ENCODE measurements at regions of chr9 and their contacts with region 1.

Region 1: GRCh38 chr9:98315551-98316060 is 60.2 kb upstream of the TBC1D2 start:
- DNase-seq: peak; percentile 26
- ATAC-seq: peak; percentile 95
- H3K4me3 ChIP-seq: no peak overlapping the region
- H3K27ac ChIP-seq: no peak overlapping the region
- H3K4me1 ChIP-seq: no peaks in the 10 kb centered on the region
- H3K27me3 ChIP-seq: no peaks in the 10 kb centered on the region
- CTCF ChIP-seq: peak; percentile 91 to 94 (median 94)
- EP300 ChIP-seq: no peak
- POLR2A ChIP-seq: no peak
- RAD21 ChIP-seq: peak; percentile 94

Region 2: GRCh38 chr9:98182069-98182820 is 133.4 kb before region 1 on chr9:
- CTCF ChIA-PET with region 1: no interaction called
- POLR2A ChIA-PET with region 1: no interaction called
- RAD21 ChIA-PET with region 1: no interaction called
- SMC1A ChIA-PET with region 1: no interaction called
- in situ Hi-C with region 1: no loop called
- intact Hi-C with region 1: no loop called
- DNase-seq: no peak
- ATAC-seq: no peak
- H3K4me3 ChIP-seq: no peak overlapping the region
- H3K27ac ChIP-seq: no peak overlapping the region
- H3K4me1 ChIP-seq: no peaks in the 10 kb centered on the region
- H3K27me3 ChIP-seq: no peaks in the 10 kb centered on the region
- CTCF ChIP-seq: no peak
- EP300 ChIP-seq: no peak
- POLR2A ChIP-seq: no peak
- RAD21 ChIP-seq: no peak

Region 3: GRCh38 chr9:98791147-98792095 is 475.8 kb after region 1 on chr9:
- CTCF ChIA-PET with region 1: interaction called, 5 read pairs
- POLR2A ChIA-PET with region 1: no interaction called
- RAD21 ChIA-PET with region 1: no interaction called
- SMC1A ChIA-PET with region 1: no interaction called
- in situ Hi-C with region 1: no loop called
- intact Hi-C with region 1: loop called (anchors 1 kb)
- DNase-seq: no peak
- ATAC-seq: peak; percentile 95
- H3K4me3 ChIP-seq: no peak overlapping the region
- H3K27ac ChIP-seq: no peak overlapping the region
- H3K4me1 ChIP-seq: peaks cover 3% of the 10 kb centered on the region; the same call in 1 of the 2 replicates
- H3K27me3 ChIP-seq: peaks cover 0 to 2% of the 10 kb centered on the region in 2 experiments; a peak in 1 of 4 replicates
- CTCF ChIP-seq: peak; percentile 90 to 97 (median 96)
- EP300 ChIP-seq: no peak
- POLR2A ChIP-seq: no peak
- RAD21 ChIP-seq: peak; percentile 82

Measured in GM12878 (cell line).